Transverse colon (tissue), 4 donors: ENCODE measurements at regions of chr6 and their contacts with region 1.

Region 1: GRCh38 chr6:31739639-31740396 is at the start of gene MSH5:
- DNase-seq: peak; percentile 99
- H3K4me3 ChIP-seq: peak within 1 kb of the TSS; percentile 58 to 73 (median 68)
- H3K27ac ChIP-seq: peak within 1 kb of the TSS; percentile 96 to 99 (median 98)
- H3K4me1 ChIP-seq: peaks cover 13 to 44% (median 37%) of the 10 kb centered on the region in 4 donors
- H3K27me3 ChIP-seq: no peaks in the 10 kb centered on the region
- CTCF ChIP-seq: no peak
- EP300 ChIP-seq: no peak
- POLR2A ChIP-seq: peak; percentile 79
- total RNA-seq, gene MSH5: 16.5 to 159 (median 43.9) TPM

Region 2: GRCh38 chr6:31827286-31828079 is 87.7 kb after region 1 on chr6 and contains the start of gene HSPA1B:
- in situ Hi-C with region 1: loop called in 1 of 4 experiments (anchors 10 kb)
- intact Hi-C with region 1: no loop called
- DNase-seq: peak; percentile 99
- H3K4me3 ChIP-seq: peak within 1 kb of the TSS; percentile 45 to 87 (median 68)
- H3K27ac ChIP-seq: peak within 1 kb of the TSS; percentile 95 to 98 (median 96)
- H3K4me1 ChIP-seq: peaks cover 28 to 62% (median 42%) of the 10 kb centered on the region in 4 donors
- H3K27me3 ChIP-seq: no peaks in the 10 kb centered on the region
- CTCF ChIP-seq: peak in 1 of 5 experiments; percentile 25
- EP300 ChIP-seq: peak; percentile 59
- POLR2A ChIP-seq: peak; percentile 100
- total RNA-seq, gene HSPA1B: 104 to 471 (median 278) TPM

Region 3: GRCh38 chr6:32664827-32665362 is 925.1 kb after region 1 on chr6:
- in situ Hi-C with region 1: no loop called
- intact Hi-C with region 1: no loop called
- DNase-seq: peak; percentile 40
- H3K4me3 ChIP-seq: no peak overlapping the region
- H3K27ac ChIP-seq: no peak overlapping the region
- H3K4me1 ChIP-seq: no peaks in the 10 kb centered on the region
- H3K27me3 ChIP-seq: peaks cover 3% of the 10 kb centered on the region
- CTCF ChIP-seq: no peak
- EP300 ChIP-seq: no peak
- POLR2A ChIP-seq: no peak